ENCODE measurements at regions of chr4 and their contacts with region 1.

Region 1: DNA sequence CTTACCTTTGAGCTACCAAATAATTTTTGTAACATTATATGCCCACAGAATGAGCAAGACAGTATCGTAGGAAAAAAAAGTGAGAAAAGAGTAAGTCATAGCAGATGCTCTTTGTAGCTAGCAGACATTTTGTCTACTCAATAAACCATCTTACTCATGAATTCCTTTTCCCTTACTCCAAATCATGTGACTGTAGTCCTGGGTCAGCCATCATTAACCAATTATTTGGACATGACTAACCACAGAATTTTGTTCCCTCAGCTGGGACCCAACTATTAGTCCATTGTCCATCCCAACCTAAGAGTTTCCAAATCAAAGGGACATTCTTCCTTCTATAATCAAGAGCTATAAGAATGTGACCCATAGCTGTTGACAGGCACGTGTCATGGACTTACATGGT is 11.4 kb downstream of the UBE2D3 start:
- DNase-seq: no peak
- H3K4me3 Mint-ChIP-seq: no peak overlapping the region
- H3K27ac Mint-ChIP-seq: no peak overlapping the region
- H3K4me1 Mint-ChIP-seq: peaks cover 38% of the 10 kb centered on the region
- H3K27me3 Mint-ChIP-seq: no peaks in the 10 kb centered on the region
- CTCF ChIP-seq: no peak

Region 2: DNA sequence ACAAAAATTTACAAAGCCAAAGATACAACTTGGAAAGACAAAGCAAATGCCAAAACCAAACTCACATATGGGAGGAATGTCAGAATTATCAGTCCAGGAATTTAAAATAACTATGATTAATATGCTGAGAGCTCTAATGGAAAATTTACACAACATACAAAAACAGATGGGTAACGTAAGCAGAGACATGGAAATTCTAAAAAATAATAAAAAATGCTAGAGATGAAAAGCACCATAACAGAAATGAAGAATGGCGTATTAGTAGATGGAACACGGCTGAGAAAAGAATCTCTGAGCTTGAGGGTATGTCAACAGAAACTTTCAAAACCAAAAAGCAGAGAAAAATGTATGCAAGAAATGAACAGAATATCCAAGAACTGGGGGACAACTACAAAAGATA is 51.1 kb before region 1 on chr4:
- CTCF ChIA-PET with region 1: no interaction called
- intact Hi-C with region 1: no loop called
- DNase-seq: no peak
- H3K4me3 Mint-ChIP-seq: no peak overlapping the region
- H3K27ac Mint-ChIP-seq: no peak overlapping the region
- H3K4me1 Mint-ChIP-seq: peaks cover 5% of the 10 kb centered on the region
- H3K27me3 Mint-ChIP-seq: no peaks in the 10 kb centered on the region
- CTCF ChIP-seq: no peak

Region 3: GRCh38 chr4:103008875-103009729 is 193.1 kb after region 1 on chr4:
- CTCF ChIA-PET with region 1: no interaction called
- intact Hi-C with region 1: loop called (anchors 5 kb)
- DNase-seq: peak; percentile 25
- H3K4me3 Mint-ChIP-seq: no peak overlapping the region
- H3K27ac Mint-ChIP-seq: no peak overlapping the region
- H3K4me1 Mint-ChIP-seq: peaks cover 13% of the 10 kb centered on the region
- H3K27me3 Mint-ChIP-seq: no peaks in the 10 kb centered on the region
- CTCF ChIP-seq: peak; percentile 23

Measured in Calu3 (cell line).